CD8-positive, alpha-beta T cell (primary cell): ENCODE measurements at regions of chr16 and their contacts with region 1.

Region 1: GRCh38 chr16:69339289-69340108 is at the starts of genes COG8 and NIP7:
- DNase-seq: peak; percentile 82 to 96 (median 91)
- ATAC-seq: peak; percentile 89
- H3K4me3 ChIP-seq: peak within 1 kb of the TSS; percentile 82 to 86
- H3K4me3 Mint-ChIP-seq: peak within 1 kb of the TSS; percentile 100
- H3K27ac ChIP-seq: peak within 1 kb of the TSS; percentile 70 to 85
- H3K27ac Mint-ChIP-seq: peak within 1 kb of the TSS; percentile 98
- H3K4me1 ChIP-seq: peaks cover 26% of the 10 kb centered on the region
- H3K4me1 Mint-ChIP-seq: peaks cover 58% of the 10 kb centered on the region
- H3K27me3 ChIP-seq: no peaks in the 10 kb centered on the region
- H3K27me3 Mint-ChIP-seq: no peaks in the 10 kb centered on the region
- CTCF ChIP-seq: peak; percentile 85
- total RNA-seq, gene COG8: 19.3 to 19.6 TPM
- total RNA-seq, gene NIP7: 44.9 to 50.0 TPM

Region 2: DNA sequence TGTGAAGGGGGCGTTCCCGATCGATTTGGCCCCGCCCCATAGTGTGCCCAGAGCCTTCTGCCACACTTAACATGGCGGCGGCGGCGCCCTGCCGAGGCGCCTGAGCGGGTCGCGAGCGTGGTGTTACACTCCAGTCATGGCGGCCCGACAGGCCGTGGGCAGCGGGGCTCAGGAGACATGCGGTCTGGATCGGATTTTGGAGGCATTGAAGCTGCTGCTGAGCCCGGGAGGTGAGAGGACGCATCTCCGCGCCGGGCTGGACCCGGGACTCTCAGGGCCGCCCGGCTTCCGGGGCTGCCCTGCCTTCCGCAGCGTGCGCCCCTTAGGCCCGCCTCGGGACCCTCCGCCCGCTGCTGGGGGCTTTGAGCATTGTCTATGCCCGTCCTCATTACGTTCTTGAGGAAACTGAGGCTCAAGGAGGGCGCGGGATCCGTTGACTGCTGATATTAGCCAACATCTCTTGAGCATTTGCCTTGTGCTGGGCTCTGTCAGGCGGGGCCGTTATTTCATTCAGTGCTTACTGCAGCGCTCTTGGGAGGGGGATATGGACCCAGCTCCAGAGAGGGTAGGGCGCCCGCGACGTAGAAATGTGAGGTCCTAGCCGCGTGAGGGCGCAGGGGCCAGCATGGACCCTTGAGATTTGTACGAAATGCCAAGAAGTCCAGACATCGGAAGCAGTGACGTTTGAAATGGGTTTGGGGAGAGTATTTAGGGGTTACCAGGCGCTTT is 495.9 kb before region 1 on chr16 and contains the start of gene TANGO6:
- CTCF ChIA-PET with region 1: no interaction called
- POLR2A ChIA-PET with region 1: no interaction called
- intact Hi-C with region 1: loop called in 1 of 2 experiments (anchors 10 kb)
- DNase-seq: peak; percentile 81 to 93 (median 90)
- ATAC-seq: peak; percentile 95
- H3K4me3 ChIP-seq: peak within 1 kb of the TSS; percentile 86 to 94
- H3K4me3 Mint-ChIP-seq: peak within 1 kb of the TSS; percentile 92
- H3K27ac ChIP-seq: peak within 1 kb of the TSS; percentile 78 to 86
- H3K27ac Mint-ChIP-seq: peak within 1 kb of the TSS; percentile 89
- H3K4me1 ChIP-seq: peaks cover 24% of the 10 kb centered on the region
- H3K4me1 Mint-ChIP-seq: peaks cover 29% of the 10 kb centered on the region
- H3K27me3 ChIP-seq: no peaks in the 10 kb centered on the region
- H3K27me3 Mint-ChIP-seq: no peaks in the 10 kb centered on the region
- CTCF ChIP-seq: no peak
- total RNA-seq, gene TANGO6: 12.1 to 16.3 TPM

Region 3: GRCh38 chr16:69310653-69311532 is 28.6 kb before region 1 on chr16 and contains the start of gene VPS4A:
- CTCF ChIA-PET with region 1: interaction called, 9 read pairs
- POLR2A ChIA-PET with region 1: interaction called, 4 read pairs
- intact Hi-C with region 1: loop called (anchors 1 kb)
- DNase-seq: peak; percentile 96 to 99 (median 98)
- ATAC-seq: peak; percentile 98
- H3K4me3 ChIP-seq: peak within 1 kb of the TSS; percentile 66 to 79
- H3K4me3 Mint-ChIP-seq: peak within 1 kb of the TSS; percentile 99
- H3K27ac ChIP-seq: peak within 1 kb of the TSS; percentile 72 to 82
- H3K27ac Mint-ChIP-seq: peak within 1 kb of the TSS; percentile 95
- H3K4me1 ChIP-seq: peaks cover 17% of the 10 kb centered on the region
- H3K4me1 Mint-ChIP-seq: peaks cover 27% of the 10 kb centered on the region
- H3K27me3 ChIP-seq: no peaks in the 10 kb centered on the region
- H3K27me3 Mint-ChIP-seq: no peaks in the 10 kb centered on the region
- CTCF ChIP-seq: peak; percentile 73
- total RNA-seq, gene VPS4A: 64.2 to 66.5 TPM

Region 4: GRCh38 chr16:69386596-69386995 is 47.1 kb after region 1 on chr16:
- CTCF ChIA-PET with region 1: no interaction called
- POLR2A ChIA-PET with region 1: no interaction called
- intact Hi-C with region 1: loop called (anchors 1 kb)
- DNase-seq: no peak
- ATAC-seq: no peak
- H3K4me3 ChIP-seq: peak overlapping the region in 1 of 2 experiments; percentile 46
- H3K4me3 Mint-ChIP-seq: peak overlapping the region; percentile 89
- H3K27ac ChIP-seq: peak overlapping the region in 1 of 2 experiments; percentile 55
- H3K27ac Mint-ChIP-seq: no peak overlapping the region
- H3K4me1 ChIP-seq: peaks cover 12% of the 10 kb centered on the region
- H3K4me1 Mint-ChIP-seq: peaks cover 30% of the 10 kb centered on the region
- H3K27me3 ChIP-seq: no peaks in the 10 kb centered on the region
- H3K27me3 Mint-ChIP-seq: no peaks in the 10 kb centered on the region
- CTCF ChIP-seq: no peak

Region 5: DNA sequence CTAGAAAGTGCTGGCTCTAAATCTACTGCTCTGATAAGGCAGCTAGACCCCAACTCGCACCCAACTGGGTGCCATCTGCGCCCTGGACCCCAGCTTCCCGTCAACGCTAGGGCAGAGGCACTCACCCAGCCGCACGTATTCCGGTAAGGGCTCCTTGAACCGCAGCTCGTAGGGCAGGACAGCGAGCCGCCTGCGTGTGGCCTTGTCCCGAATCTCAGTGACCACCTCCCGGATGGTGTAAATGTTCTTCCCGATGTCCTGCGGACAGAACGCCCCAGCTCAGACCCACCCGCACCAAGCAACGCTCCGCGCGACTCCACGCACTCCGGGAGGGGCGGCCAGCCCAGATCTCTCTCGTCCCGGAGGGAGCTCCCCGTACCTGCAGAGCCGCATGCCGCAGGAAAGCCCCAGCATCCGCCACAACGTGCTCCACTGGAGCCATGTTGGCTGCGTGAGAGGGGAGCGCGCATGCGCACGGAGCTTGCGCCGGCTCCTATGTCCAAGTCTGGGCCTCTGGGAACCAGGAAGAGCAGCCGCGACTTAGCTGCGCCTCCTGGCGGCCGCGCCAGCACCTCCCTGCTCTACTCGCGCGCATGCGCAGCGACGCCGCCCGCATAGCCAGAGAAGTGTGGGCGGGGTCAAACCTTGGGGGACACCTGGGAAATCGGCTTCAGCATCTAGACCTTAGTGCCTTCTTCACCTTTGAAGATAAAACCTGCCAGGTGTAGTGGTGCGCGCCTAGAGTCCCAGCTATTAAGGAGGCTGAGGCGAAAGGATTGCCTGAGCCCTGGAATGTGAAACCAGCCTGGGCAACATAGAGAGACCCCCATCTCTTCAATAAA is 415.2 kb after region 1 on chr16 and contains the start of gene NOB1:
- CTCF ChIA-PET with region 1: no interaction called
- POLR2A ChIA-PET with region 1: no interaction called
- intact Hi-C with region 1: loop called in 1 of 2 experiments (anchors 2 kb)
- DNase-seq: peak; percentile 94 to 100 (median 98)
- ATAC-seq: peak; percentile 97
- H3K4me3 ChIP-seq: peak within 1 kb of the TSS; percentile 91 to 100
- H3K4me3 Mint-ChIP-seq: peak within 1 kb of the TSS; percentile 100
- H3K27ac ChIP-seq: peak within 1 kb of the TSS; percentile 78 to 84
- H3K27ac Mint-ChIP-seq: peak within 1 kb of the TSS; percentile 98
- H3K4me1 ChIP-seq: peaks cover 9% of the 10 kb centered on the region
- H3K4me1 Mint-ChIP-seq: peaks cover 29% of the 10 kb centered on the region
- H3K27me3 ChIP-seq: no peaks in the 10 kb centered on the region
- H3K27me3 Mint-ChIP-seq: no peaks in the 10 kb centered on the region
- CTCF ChIP-seq: peak; percentile 79
- total RNA-seq, gene NOB1: 46.4 to 48.0 TPM

Region 6: GRCh38 chr16:70342016-70342415 is 1002.5 kb after region 1 on chr16:
- CTCF ChIA-PET with region 1: no interaction called
- POLR2A ChIA-PET with region 1: no interaction called
- intact Hi-C with region 1: loop called in 1 of 2 experiments (anchors 10 kb)
- DNase-seq: no peak
- ATAC-seq: no peak
- H3K4me3 ChIP-seq: no peak overlapping the region
- H3K4me3 Mint-ChIP-seq: no peak overlapping the region
- H3K27ac ChIP-seq: no peak overlapping the region
- H3K27ac Mint-ChIP-seq: no peak overlapping the region
- H3K4me1 ChIP-seq: peaks cover 8% of the 10 kb centered on the region
- H3K4me1 Mint-ChIP-seq: peaks cover 9% of the 10 kb centered on the region
- H3K27me3 ChIP-seq: no peaks in the 10 kb centered on the region
- H3K27me3 Mint-ChIP-seq: no peaks in the 10 kb centered on the region
- CTCF ChIP-seq: no peak